ENCODE measurements at regions of chr6 and their contacts with region 1.

Region 1: GRCh38 chr6:122839477-122839876 is 50.4 kb downstream of the SMPDL3A start:
- DNase-seq: no peak
- H3K4me3 ChIP-seq: no peak overlapping the region
- H3K27ac ChIP-seq: no peak overlapping the region
- H3K4me1 ChIP-seq: no peaks in the 10 kb centered on the region
- H3K27me3 ChIP-seq: peaks cover 23% of the 10 kb centered on the region
- CTCF ChIP-seq: peak; percentile 76

Region 2: GRCh38 chr6:122730775-122731386 is 108.6 kb before region 1 on chr6:
- intact Hi-C with region 1: loop called (anchors 5 kb)
- DNase-seq: no peak
- H3K4me3 ChIP-seq: no peak overlapping the region
- H3K27ac ChIP-seq: no peak overlapping the region
- H3K4me1 ChIP-seq: no peaks in the 10 kb centered on the region
- H3K27me3 ChIP-seq: peaks cover 38% of the 10 kb centered on the region
- CTCF ChIP-seq: peak; percentile 86

Region 3: DNA sequence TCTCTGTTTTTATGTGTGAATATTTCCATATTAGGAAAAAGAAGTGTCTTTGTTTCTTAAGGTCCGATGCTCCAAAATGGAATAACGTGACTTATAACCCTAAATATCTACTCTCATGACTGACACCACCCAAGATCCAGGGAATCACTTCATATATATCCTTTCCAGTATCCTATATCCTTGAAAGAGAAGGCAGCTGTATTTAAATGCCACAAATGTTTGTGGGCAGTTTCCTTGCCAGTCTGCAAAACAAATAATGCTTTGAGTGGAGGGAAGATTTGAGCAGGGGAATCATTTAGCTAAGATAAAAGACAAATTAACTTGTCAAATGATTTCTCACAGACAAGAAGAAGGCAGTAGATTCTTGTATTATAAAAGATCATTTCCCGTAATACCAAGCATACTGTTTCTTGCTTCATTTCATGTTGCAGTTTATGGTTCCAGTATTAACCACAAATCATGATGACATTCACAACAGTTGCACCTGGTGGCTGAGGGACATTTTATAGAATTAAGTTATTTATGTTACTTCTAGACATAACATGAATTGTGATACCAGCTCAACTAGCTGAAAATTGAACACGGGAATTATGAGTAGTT is 89.9 kb before region 1 on chr6:
- intact Hi-C with region 1: loop called (anchors 5 kb)
- DNase-seq: no peak
- H3K4me3 ChIP-seq: no peak overlapping the region
- H3K27ac ChIP-seq: no peak overlapping the region
- H3K4me1 ChIP-seq: peaks cover 2% of the 10 kb centered on the region
- H3K27me3 ChIP-seq: peaks cover 5% of the 10 kb centered on the region
- CTCF ChIP-seq: no peak

Measured in left ventricle myocardium inferior (tissue), 1 donor.